KBM-7 (cell line): ENCODE measurements at regions of chr5 and their contacts with region 1.

Region 1: DNA sequence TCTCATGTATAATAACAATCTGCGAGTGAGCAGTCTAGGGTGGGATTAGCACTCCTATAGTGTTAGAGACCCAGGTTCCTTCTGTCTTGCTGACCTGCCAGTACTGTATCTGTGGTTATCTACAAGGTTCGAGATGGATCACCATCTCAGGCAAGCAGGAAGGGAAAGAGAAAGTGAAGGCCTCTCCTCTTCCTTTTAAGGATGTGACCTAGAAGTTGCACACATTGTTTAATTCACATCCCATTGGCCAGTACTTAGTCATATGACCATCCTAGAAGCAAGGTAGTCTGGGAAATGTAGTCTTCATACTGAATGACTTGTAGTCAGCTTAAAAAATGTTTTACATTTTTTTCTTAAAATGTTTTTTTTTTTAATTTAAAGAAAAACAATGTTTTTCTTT is 168.6 kb downstream of the CARTPT start:
- DNase-seq: peak; percentile 40

Region 2: GRCh38 chr5:71734141-71734540 is 153.5 kb before region 1 on chr5:
- in situ Hi-C with region 1: no loop called
- DNase-seq: no peak

Region 3: GRCh38 chr5:71782771-71783770 is 104.6 kb before region 1 on chr5:
- in situ Hi-C with region 1: loop called (anchors 25 kb)
- DNase-seq: peak; percentile 71

Region 4: GRCh38 chr5:72355706-72356299 is 468.1 kb after region 1 on chr5:
- in situ Hi-C with region 1: no loop called
- DNase-seq: no peak

Region 5: GRCh38 chr5:72427488-72428437 is 540.1 kb after region 1 on chr5:
- in situ Hi-C with region 1: no loop called
- DNase-seq: no peak